ENCODE measurements at regions of chr13 and their contacts with region 1.

Region 1: DNA sequence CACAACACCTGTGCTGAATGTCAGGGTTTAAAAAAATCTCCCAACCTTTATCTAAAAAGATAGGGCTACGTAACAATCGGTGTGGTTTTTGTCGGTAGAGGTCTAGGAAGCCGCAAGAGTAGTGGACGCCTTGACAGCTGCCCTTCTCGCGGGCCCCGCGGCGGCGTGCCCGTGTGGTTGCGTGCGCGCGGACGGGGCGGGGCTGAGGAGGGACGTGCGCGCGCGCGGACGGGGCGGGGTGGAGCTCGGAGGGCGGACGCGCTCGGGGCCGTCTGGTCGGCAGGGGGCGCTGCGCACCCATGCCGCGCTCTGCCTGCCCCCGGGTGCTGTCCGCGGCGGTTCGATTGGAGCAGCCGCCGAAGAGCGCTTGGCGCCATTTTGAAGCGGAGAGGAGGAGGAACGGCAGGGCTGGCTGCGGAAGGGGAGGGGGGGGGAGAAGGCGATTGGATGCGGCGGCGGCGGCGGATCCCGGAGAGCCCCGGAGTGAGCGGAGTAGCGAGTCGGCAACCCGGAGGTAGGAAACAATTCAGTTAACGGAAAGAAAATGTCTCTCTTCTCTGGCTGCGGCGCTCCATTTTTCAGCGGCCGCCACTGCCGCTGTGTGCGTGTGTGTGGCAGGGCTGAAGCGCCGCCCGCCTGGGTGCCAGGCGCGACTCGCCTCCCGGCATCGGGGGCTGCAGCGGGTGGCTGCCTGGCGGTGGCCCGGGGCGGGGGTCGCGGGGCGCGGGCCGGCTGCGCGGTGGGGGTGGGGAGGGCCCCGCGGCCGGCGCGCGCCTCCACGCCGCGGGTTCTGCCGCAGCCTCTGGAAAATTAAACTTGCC is at the start of gene PDS5B:
- DNase-seq: peak; percentile 95 to 98 (median 96)
- ATAC-seq: peak; percentile 95 to 99 (median 96)
- H3K4me3 ChIP-seq: peak within 1 kb of the TSS; percentile 66 to 95 (median 84)
- H3K27ac ChIP-seq: peak within 1 kb of the TSS; percentile 86 to 96 (median 93)
- H3K4me1 ChIP-seq: peaks cover 0 to 38% (median 27%) of the 10 kb centered on the region in 12 donors
- H3K27me3 ChIP-seq: no peaks in the 10 kb centered on the region
- CTCF ChIP-seq: peak; percentile 66 to 97 (median 94)
- POLR2A ChIP-seq: peak in 1 of 2 donors; percentile 81
- total RNA-seq, gene PDS5B: 12.0 to 28.8 (median 19.4) TPM

Region 2: GRCh38 chr13:32530841-32531253 is 55.4 kb before region 1 on chr13:
- intact Hi-C with region 1: no loop called
- DNase-seq: peak in 1 of 5 donors; percentile 23
- ATAC-seq: peak; percentile 52 to 76 (median 59)
- H3K4me3 ChIP-seq: peak overlapping the region in 2 of 12 donors; percentile 11 to 34
- H3K27ac ChIP-seq: peak overlapping the region in 5 of 12 donors; percentile 1 to 76 (median 19)
- H3K4me1 ChIP-seq: peaks cover 21 to 98% (median 81%) of the 10 kb centered on the region in 12 donors
- H3K27me3 ChIP-seq: no peaks in the 10 kb centered on the region
- CTCF ChIP-seq: no peak
- POLR2A ChIP-seq: no peak

Region 3: DNA sequence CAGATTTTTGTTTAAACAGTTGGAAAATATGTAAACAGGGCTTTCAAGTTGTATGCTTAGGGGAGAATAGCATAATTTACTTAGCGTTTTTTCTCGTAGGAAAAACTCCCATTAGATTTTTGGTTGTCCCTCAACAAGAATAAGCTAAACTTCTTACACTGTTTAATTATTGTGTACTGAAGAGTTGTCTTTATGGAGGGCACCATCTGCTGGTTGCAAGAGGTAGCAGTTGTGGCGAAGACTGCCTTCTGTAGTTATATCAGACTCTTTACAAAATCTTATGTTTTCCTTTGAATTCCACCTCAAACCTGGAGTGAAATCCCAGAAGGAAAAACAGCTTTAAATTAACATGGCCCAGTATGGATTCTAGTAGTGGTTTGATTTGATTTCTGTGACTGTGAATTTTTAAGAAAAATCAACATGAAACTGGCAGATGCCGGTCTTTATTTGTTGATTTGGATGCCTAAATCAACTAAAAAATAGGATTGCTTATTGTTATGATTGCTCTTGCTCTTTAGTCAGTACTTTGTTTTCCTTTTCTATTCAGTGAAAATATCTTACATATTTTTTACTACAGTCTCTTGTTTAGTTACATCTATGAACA is 53.3 kb after region 1 on chr13:
- intact Hi-C with region 1: loop called (anchors 1 to 5 kb)
- DNase-seq: peak in 4 of 5 donors; percentile 43 to 58 (median 48)
- ATAC-seq: peak in 3 of 4 donors; percentile 80 to 91 (median 86)
- H3K4me3 ChIP-seq: no peak overlapping the region
- H3K27ac ChIP-seq: no peak overlapping the region
- H3K4me1 ChIP-seq: peaks cover 0 to 42% (median 9%) of the 10 kb centered on the region in 12 donors
- H3K27me3 ChIP-seq: no peaks in the 10 kb centered on the region
- CTCF ChIP-seq: peak; percentile 69 to 91 (median 82)
- POLR2A ChIP-seq: no peak

Region 4: DNA sequence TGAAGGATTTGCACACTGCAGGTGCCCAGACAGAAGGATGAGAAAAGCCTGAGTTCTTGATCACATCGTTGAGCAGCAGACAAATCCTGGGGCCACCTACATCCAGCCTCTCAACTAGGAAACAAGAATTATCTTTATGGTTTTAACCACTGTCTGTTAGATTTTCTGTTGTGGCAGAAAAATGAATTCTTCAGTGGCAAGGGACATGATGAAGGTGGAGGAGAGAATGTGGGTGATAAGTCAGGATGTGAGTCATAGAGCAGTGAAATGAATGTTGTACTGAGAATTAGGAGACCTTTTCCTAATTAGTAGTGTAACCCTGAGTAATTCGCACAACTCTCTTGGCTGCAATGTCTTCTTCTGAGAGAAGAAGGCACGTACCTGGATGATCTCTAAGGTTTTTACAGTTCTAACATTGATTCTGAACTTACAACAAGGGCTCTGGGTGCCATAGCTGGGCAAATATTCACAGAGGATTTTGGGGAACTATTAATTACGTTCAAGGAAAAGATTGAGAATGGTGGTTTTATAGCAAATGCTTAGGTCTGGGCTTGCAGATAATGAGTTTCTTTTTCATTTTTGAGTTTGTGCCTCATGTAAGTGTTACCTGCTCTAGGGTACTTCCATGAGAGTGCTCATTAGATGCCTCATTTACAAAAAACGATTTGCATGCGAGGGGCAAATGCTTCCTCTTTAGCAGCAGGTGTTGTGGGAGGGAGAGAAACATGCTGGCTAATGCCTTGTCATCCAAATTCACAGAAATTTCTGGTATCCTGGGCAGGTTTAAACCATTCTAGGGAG is 319.0 kb after region 1 on chr13:
- intact Hi-C with region 1: loop called in 1 of 10 experiments (anchors 10 kb)
- DNase-seq: no peak
- ATAC-seq: no peak
- H3K4me3 ChIP-seq: no peak overlapping the region
- H3K27ac ChIP-seq: peak overlapping the region in 5 of 12 donors; percentile 16 to 82 (median 34)
- H3K4me1 ChIP-seq: peaks cover 0 to 34% (median 0%) of the 10 kb centered on the region in 12 donors
- H3K27me3 ChIP-seq: no peaks in the 10 kb centered on the region
- CTCF ChIP-seq: no peak
- POLR2A ChIP-seq: no peak

Region 5: GRCh38 chr13:33017323-33017929 is 431.1 kb after region 1 on chr13:
- intact Hi-C with region 1: loop called in 2 of 10 experiments (anchors 5 kb)
- DNase-seq: peak in 4 of 5 donors; percentile 50 to 57 (median 56)
- ATAC-seq: peak; percentile 73 to 87 (median 86)
- H3K4me3 ChIP-seq: peak overlapping the region; percentile 42 to 69 (median 63)
- H3K27ac ChIP-seq: peak overlapping the region; percentile 68 to 93 (median 88)
- H3K4me1 ChIP-seq: peaks cover 0 to 24% (median 11%) of the 10 kb centered on the region in 12 donors
- H3K27me3 ChIP-seq: peaks cover 0 to 33% (median 0%) of the 10 kb centered on the region in 9 donors
- CTCF ChIP-seq: peak; percentile 43 to 74 (median 65)
- POLR2A ChIP-seq: peak in 1 of 2 donors; percentile 41

Region 6: DNA sequence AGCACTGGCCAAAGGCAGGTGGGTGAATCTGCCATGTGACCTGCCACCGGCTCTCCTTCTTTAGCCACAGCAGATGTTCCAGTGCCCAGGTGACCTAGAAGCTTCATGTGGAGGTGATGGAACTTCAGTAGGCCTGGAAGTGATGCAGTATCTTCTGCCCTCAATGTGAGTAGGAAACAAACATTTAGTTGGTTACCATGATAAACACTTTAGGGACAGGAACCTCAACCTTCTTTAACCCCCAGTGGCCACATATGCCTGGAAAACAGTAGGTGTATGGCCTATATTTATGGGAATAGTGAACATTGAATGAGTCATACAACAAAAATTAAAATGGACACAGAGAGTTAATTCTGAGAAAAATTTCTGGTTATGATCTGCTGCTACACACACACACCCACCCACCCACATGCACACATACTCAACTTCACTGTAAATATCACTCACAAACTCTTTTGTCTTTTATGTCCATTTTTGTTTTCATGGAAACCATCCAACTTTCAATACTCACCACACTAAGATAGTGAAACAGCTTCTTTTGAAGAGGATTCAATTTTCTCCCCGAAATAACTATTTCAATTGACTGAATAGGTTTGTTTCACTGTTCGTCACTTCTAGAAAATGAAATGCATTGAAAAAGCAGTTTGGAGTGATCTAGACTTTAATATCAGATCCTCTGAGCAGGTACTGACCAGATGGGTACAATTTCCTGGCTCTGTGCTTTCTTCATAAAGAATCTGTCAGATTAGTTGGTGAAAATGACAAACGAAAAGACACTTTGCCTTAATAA is 602.0 kb after region 1 on chr13:
- intact Hi-C with region 1: no loop called
- DNase-seq: no peak
- ATAC-seq: no peak
- H3K4me3 ChIP-seq: no peak overlapping the region
- H3K27ac ChIP-seq: peak overlapping the region in 9 of 12 donors; percentile 25 to 77 (median 41)
- H3K4me1 ChIP-seq: peaks cover 3 to 91% (median 68%) of the 10 kb centered on the region in 12 donors
- H3K27me3 ChIP-seq: no peaks in the 10 kb centered on the region
- CTCF ChIP-seq: no peak
- POLR2A ChIP-seq: no peak

Region 7: GRCh38 chr13:33508060-33508459 is 921.8 kb after region 1 on chr13:
- intact Hi-C with region 1: no loop called
- DNase-seq: peak in 1 of 5 donors; percentile 23
- ATAC-seq: no peak
- H3K4me3 ChIP-seq: no peak overlapping the region
- H3K27ac ChIP-seq: peak overlapping the region in 7 of 12 donors; percentile 25 to 93 (median 90)
- H3K4me1 ChIP-seq: peaks cover 7 to 42% (median 27%) of the 10 kb centered on the region in 12 donors
- H3K27me3 ChIP-seq: no peaks in the 10 kb centered on the region
- CTCF ChIP-seq: no peak
- POLR2A ChIP-seq: no peak